K562 (cell line): ENCODE measurements at regions of chr17 and their contacts with region 1.

Region 1: DNA sequence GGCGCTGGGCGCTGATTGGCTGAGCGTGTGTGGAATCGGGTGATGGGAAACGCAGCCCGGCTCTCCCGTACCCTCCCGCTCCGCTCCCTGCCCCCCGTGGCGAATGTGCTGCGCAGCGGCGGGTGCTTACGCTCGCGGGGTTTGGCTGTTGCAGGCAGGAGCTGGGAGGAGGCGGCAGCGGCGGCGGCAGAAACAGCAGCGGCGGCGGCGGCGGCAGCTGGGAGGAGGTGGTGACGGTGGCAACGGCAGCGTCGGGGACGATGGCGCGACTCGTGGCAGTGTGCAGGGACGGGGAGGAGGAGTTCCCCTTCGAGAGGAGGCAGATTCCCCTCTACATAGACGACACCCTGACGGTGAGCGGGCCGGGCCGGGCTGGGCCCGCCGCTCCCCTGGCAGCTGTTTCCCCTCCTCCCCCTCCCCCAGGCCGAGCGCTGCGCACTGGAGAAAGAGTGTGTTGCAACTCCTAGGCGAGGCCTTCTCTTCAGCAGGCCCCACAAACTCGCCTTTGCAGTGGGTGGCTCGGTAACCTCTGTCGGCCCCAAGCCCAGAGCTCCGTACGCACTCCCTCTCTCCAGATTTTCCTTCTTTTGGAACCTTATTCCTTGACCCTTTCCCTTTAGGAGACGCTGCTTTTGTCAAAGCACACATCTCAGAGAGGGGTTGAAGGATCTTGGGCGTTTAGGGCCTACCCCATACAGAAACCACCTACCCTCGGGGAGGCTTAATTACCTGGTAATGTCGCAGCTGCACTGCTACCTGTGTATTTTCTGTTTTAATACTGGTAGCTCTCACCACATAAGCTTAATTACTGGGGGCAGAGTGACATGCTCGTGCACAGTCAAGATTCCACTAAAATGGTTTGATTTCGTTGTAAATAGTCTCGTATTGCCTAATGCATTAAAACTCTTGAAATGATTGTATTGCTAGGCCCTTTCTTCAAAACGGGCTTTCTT is 1.0 kb downstream of the GGNBP2 start:
- DNase-seq: peak; percentile 93 to 98 (median 96)
- ATAC-seq: peak; percentile 88
- H3K4me3 ChIP-seq: peak overlapping the region; percentile 85
- H3K27ac ChIP-seq: peak overlapping the region; percentile 90
- H3K4me1 ChIP-seq: peaks cover 13 to 20% of the 10 kb centered on the region in 2 experiments; a peak in 4 of 5 replicates
- H3K27me3 ChIP-seq: no peaks in the 10 kb centered on the region
- CTCF ChIP-seq: 0 out of 6 replicates have a peak, but pooled peaks of 1 of the 3 experiments have one; percentile 18
- EP300 ChIP-seq: peak; percentile 99
- POLR2A ChIP-seq: 0 out of 2 replicates have a peak, but pooled peaks have one; percentile 10
- RAD21 ChIP-seq: no peak

Region 2: GRCh38 chr17:36188891-36189306 is 356.8 kb before region 1 on chr17:
- CTCF ChIA-PET with region 1: no interaction called
- POLR2A ChIA-PET with region 1: no interaction called
- in situ Hi-C with region 1: no loop called
- intact Hi-C with region 1: no loop called
- DNase-seq: no peak
- ATAC-seq: no peak
- H3K4me3 ChIP-seq: no peak overlapping the region
- H3K27ac ChIP-seq: no peak overlapping the region
- H3K4me1 ChIP-seq: no peaks in the 10 kb centered on the region
- H3K27me3 ChIP-seq: peaks cover 5 to 27% of the 10 kb centered on the region in 2 experiments; a peak in 3 of 5 replicates
- CTCF ChIP-seq: no peak
- EP300 ChIP-seq: no peak
- POLR2A ChIP-seq: no peak
- RAD21 ChIP-seq: no peak

Region 3: GRCh38 chr17:36566081-36566480 is 20.3 kb after region 1 on chr17:
- CTCF ChIA-PET with region 1: no interaction called
- POLR2A ChIA-PET with region 1: interaction called, 12 read pairs
- in situ Hi-C with region 1: no loop called
- intact Hi-C with region 1: no loop called
- DNase-seq: no peak
- ATAC-seq: no peak
- H3K4me3 ChIP-seq: no peak overlapping the region
- H3K27ac ChIP-seq: no peak overlapping the region
- H3K4me1 ChIP-seq: no peaks in the 10 kb centered on the region
- H3K27me3 ChIP-seq: no peaks in the 10 kb centered on the region
- CTCF ChIP-seq: no peak
- EP300 ChIP-seq: no peak
- POLR2A ChIP-seq: no peak
- RAD21 ChIP-seq: no peak

Region 4: GRCh38 chr17:36591434-36592315 is 45.9 kb after region 1 on chr17 and contains the start of gene DHRS11:
- CTCF ChIA-PET with region 1: no interaction called
- POLR2A ChIA-PET with region 1: interaction called, 12 read pairs
- in situ Hi-C with region 1: loop called (anchors 5 kb)
- intact Hi-C with region 1: loop called (anchors 2 kb)
- DNase-seq: peak; percentile 89 to 95 (median 94)
- ATAC-seq: peak; percentile 94
- H3K4me3 ChIP-seq: peak within 1 kb of the TSS; percentile 79
- H3K27ac ChIP-seq: peak within 1 kb of the TSS; percentile 73
- H3K4me1 ChIP-seq: peaks cover 44 to 53% of the 10 kb centered on the region in 2 experiments
- H3K27me3 ChIP-seq: no peaks in the 10 kb centered on the region
- CTCF ChIP-seq: peak in 1 of 3 experiments; percentile 19; a peak in 1 of 6 replicates
- EP300 ChIP-seq: no peak
- POLR2A ChIP-seq: peak; percentile 72
- RAD21 ChIP-seq: no peak
- polyA plus RNA-seq, gene DHRS11: 15.2 to 23.0 TPM

Region 5: GRCh38 chr17:36601303-36602029 is 55.7 kb after region 1 on chr17 and contains the start of gene MRM1:
- CTCF ChIA-PET with region 1: interaction called, 3 read pairs
- POLR2A ChIA-PET with region 1: interaction called, 12 read pairs
- in situ Hi-C with region 1: no loop called
- intact Hi-C with region 1: loop called (anchors 2 kb)
- DNase-seq: peak; percentile 94 to 97 (median 94)
- ATAC-seq: peak; percentile 85
- H3K4me3 ChIP-seq: peak within 1 kb of the TSS; percentile 82
- H3K27ac ChIP-seq: peak within 1 kb of the TSS; percentile 98
- H3K4me1 ChIP-seq: peaks cover 57 to 66% of the 10 kb centered on the region in 2 experiments
- H3K27me3 ChIP-seq: no peaks in the 10 kb centered on the region
- CTCF ChIP-seq: peak; percentile 22 to 34 (median 30); a peak in 3 of 6 replicates
- EP300 ChIP-seq: no peak; the same call in 1 of the 2 replicates
- POLR2A ChIP-seq: peak; percentile 87
- RAD21 ChIP-seq: no peak
- polyA plus RNA-seq, gene MRM1: 0.61 to 1.4 TPM

Region 6: GRCh38 chr17:36722121-36722902 is 176.6 kb after region 1 on chr17:
- CTCF ChIA-PET with region 1: no interaction called
- POLR2A ChIA-PET with region 1: no interaction called
- in situ Hi-C with region 1: no loop called
- intact Hi-C with region 1: loop called (anchors 10 kb)
- DNase-seq: peak; percentile 92 to 98 (median 97)
- ATAC-seq: peak; percentile 91
- H3K4me3 ChIP-seq: peak overlapping the region; percentile 40
- H3K27ac ChIP-seq: peak overlapping the region; percentile 75
- H3K4me1 ChIP-seq: peaks cover 46 to 47% of the 10 kb centered on the region in 2 experiments
- H3K27me3 ChIP-seq: no peaks in the 10 kb centered on the region
- CTCF ChIP-seq: 0 out of 6 replicates have a peak, but pooled peaks of 1 of the 3 experiments have one; percentile 3
- EP300 ChIP-seq: peak; percentile 22; the same call in 1 of the 2 replicates
- POLR2A ChIP-seq: peak; percentile 77
- RAD21 ChIP-seq: no peak